ENCODE measurements at regions of chr16 and their contacts with region 1.

Region 1: GRCh38 chr16:10964039-10964890 is 19.9 kb downstream of the CLEC16A start:
- DNase-seq: peak; percentile 77
- H3K4me3 Mint-ChIP-seq: peak overlapping the region; percentile 51
- H3K27ac Mint-ChIP-seq: peak overlapping the region; percentile 94
- H3K4me1 Mint-ChIP-seq: peaks cover 67% of the 10 kb centered on the region
- H3K27me3 Mint-ChIP-seq: no peaks in the 10 kb centered on the region

Region 2: DNA sequence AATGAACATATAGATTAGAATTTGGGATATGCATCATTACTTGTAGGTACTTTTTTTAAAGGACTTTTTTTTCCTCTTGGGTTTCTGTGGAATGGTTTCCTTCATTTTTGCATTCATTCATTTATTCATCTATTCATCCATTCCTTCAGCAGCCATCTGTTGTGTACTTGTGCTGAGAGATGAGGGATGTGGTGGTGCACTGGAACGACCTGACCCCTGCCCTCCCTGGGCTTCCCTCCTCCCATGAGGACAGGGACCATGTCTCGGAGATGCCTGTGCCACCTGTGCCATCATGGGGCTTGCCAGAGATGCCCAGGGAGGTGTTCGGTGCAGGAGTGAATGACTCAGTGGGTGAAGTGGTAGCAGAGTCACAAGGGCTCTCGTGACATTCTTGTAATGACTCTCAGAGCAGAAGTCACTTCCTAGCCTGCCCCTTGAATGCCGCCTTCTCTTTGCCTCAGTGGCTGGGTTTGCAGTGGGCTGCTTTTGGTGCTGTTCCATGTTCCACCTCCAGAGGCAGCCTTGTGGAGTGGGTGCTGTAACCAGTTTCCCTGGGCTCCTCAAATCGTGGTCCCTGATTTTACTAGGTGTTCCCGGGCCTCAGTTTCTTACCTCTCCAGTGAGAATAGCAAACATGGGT is 24.0 kb after region 1 on chr16:
- intact Hi-C with region 1: loop called (anchors 1 kb)
- DNase-seq: peak; percentile 63
- H3K4me3 Mint-ChIP-seq: peak overlapping the region; percentile 62
- H3K27ac Mint-ChIP-seq: peak overlapping the region; percentile 84
- H3K4me1 Mint-ChIP-seq: peaks cover 81% of the 10 kb centered on the region
- H3K27me3 Mint-ChIP-seq: no peaks in the 10 kb centered on the region

Region 3: DNA sequence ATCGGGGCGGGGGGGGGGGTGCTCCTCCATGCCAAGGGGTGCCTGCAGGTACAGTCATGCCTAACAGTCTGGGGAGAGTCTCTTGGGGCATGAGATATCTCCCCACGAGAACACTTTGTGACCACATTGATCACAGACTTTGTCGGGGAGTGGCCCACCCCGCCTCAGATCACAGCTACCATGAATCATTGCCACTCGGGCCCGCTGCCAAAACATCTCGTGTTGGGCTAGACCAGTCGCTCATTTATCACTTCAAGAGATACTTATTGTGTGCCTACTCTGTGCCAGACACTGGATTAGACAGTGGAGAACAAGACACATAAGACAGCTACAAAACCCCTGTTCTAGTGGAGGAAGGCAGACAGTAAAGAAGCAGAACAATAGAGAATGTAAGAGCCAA is 52.7 kb after region 1 on chr16:
- intact Hi-C with region 1: no loop called
- DNase-seq: no peak
- H3K4me3 Mint-ChIP-seq: no peak overlapping the region
- H3K27ac Mint-ChIP-seq: peak overlapping the region; percentile 36
- H3K4me1 Mint-ChIP-seq: peaks cover 37% of the 10 kb centered on the region
- H3K27me3 Mint-ChIP-seq: no peaks in the 10 kb centered on the region

Region 4: GRCh38 chr16:11076259-11077018 is 112.2 kb after region 1 on chr16:
- intact Hi-C with region 1: loop called (anchors 1 kb)
- DNase-seq: peak; percentile 70
- H3K4me3 Mint-ChIP-seq: peak overlapping the region; percentile 31
- H3K27ac Mint-ChIP-seq: peak overlapping the region; percentile 94
- H3K4me1 Mint-ChIP-seq: peaks cover 95% of the 10 kb centered on the region
- H3K27me3 Mint-ChIP-seq: no peaks in the 10 kb centered on the region

Region 5: GRCh38 chr16:11175787-11176341 is 211.6 kb after region 1 on chr16:
- intact Hi-C with region 1: loop called (anchors 5 kb)
- DNase-seq: peak; percentile 35
- H3K4me3 Mint-ChIP-seq: no peak overlapping the region
- H3K27ac Mint-ChIP-seq: peak overlapping the region; percentile 83
- H3K4me1 Mint-ChIP-seq: peaks cover 79% of the 10 kb centered on the region
- H3K27me3 Mint-ChIP-seq: no peaks in the 10 kb centered on the region

Region 6: GRCh38 chr16:11255737-11256660 is 291.7 kb after region 1 on chr16 and contains the start of gene SOCS1:
- intact Hi-C with region 1: loop called (anchors 1 kb)
- DNase-seq: peak; percentile 90
- H3K4me3 Mint-ChIP-seq: peak within 1 kb of the TSS; percentile 99
- H3K27ac Mint-ChIP-seq: peak within 1 kb of the TSS; percentile 97
- H3K4me1 Mint-ChIP-seq: peaks cover 38% of the 10 kb centered on the region
- H3K27me3 Mint-ChIP-seq: no peaks in the 10 kb centered on the region
- total RNA-seq, gene SOCS1: 217 and 219 TPM in 2 replicates

Region 7: DNA sequence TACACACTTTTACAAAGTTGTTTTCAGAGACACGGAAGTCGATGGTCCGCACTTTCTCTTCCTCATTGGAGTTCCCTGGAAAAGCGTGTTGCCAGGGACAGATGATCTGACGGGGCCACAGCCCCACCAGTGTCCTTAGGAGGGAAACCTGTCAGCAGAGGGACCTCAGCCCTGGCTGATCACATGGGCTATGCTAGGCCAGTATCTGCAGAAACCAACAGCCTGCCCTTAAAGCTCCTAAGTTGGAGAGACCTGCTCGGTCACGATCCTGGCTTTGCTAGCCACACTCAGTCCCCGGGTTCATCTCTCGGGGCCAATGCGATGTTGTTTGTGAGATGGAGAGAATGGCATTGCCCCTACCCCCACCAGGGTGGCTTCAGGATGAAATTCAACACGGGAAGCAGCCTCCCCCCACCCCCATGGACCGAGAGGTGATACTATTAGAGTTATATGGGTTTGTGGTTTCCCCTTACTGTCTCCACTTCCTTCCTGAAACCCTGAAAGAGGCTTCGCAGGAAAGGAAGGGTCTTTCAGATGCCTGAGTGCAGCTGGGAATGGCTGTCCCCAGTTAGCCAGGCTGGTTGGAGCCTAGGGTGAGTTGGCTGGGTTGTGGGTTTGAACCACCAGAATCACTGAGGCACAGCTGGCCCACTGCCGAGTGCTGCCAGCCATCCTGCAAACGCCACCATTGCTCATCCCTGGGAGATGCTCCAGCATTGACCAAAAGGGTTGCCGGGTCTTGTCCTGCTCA is 397.6 kb after region 1 on chr16:
- intact Hi-C with region 1: loop called (anchors 2 kb)
- DNase-seq: peak; percentile 33
- H3K4me3 Mint-ChIP-seq: peak overlapping the region; percentile 47
- H3K27ac Mint-ChIP-seq: peak overlapping the region; percentile 18
- H3K4me1 Mint-ChIP-seq: peaks cover 56% of the 10 kb centered on the region
- H3K27me3 Mint-ChIP-seq: no peaks in the 10 kb centered on the region

Region 8: DNA sequence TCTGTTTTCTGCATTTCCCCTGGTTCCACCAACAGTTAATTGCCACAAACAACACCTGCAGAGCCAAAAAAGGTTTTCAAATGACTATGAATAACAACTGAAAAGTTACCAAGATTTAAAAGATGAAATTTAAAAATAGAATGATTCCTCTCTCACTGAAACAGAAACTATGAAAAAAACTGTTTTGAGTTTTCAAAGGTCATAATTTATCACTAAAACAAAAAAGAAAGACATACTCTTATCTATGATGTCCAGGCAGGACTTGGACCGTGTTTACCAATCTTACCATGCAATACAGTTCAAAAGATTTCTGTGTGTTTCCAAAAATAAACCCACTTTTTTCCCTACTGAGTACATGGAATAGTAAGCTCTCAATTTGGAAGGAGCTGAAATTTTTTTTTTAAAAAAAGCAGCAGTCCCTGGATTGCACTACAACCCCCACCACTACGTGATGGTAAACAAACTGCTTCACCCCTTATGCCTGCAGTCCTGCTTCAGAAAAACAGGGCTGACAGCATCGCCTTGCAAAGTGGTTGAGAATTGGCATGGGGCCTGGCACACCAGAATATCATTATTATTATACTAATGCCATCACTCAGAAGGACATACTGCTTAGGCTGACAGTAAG is 769.9 kb after region 1 on chr16:
- intact Hi-C with region 1: loop called (anchors 10 kb)
- DNase-seq: no peak
- H3K4me3 Mint-ChIP-seq: peak overlapping the region; percentile 33
- H3K27ac Mint-ChIP-seq: peak overlapping the region; percentile 75
- H3K4me1 Mint-ChIP-seq: peaks cover 77% of the 10 kb centered on the region
- H3K27me3 Mint-ChIP-seq: no peaks in the 10 kb centered on the region